Psoas muscle (tissue), 8 donors: ENCODE measurements at regions of chr7 and their contacts with region 1.

Region 1: GRCh38 chr7:140397784-140398750 is at the start of gene SLC37A3:
- DNase-seq: peak; percentile 87 to 92
- ATAC-seq: peak; percentile 98 to 100 (median 100)
- H3K4me3 ChIP-seq: peak within 1 kb of the TSS; percentile 98
- H3K27ac ChIP-seq: peak within 1 kb of the TSS; percentile 82
- H3K4me1 ChIP-seq: no peaks in the 10 kb centered on the region
- H3K27me3 ChIP-seq: peaks cover 0 to 13% (median 0%) of the 10 kb centered on the region in 3 donors
- CTCF ChIP-seq: peak; percentile 5
- total RNA-seq, gene SLC37A3: 7.0 to 9.1 (median 8.0) TPM

Region 2: GRCh38 chr7:139271718-139272628 is 1126.1 kb before region 1 on chr7:
- intact Hi-C with region 1: no loop called
- DNase-seq: no peak
- ATAC-seq: peak; percentile 76 to 94 (median 92)
- H3K4me3 ChIP-seq: peak overlapping the region; percentile 28
- H3K27ac ChIP-seq: peak overlapping the region; percentile 66
- H3K4me1 ChIP-seq: peaks cover 8% of the 10 kb centered on the region
- H3K27me3 ChIP-seq: no peaks in the 10 kb centered on the region
- CTCF ChIP-seq: no peak

Region 3: DNA sequence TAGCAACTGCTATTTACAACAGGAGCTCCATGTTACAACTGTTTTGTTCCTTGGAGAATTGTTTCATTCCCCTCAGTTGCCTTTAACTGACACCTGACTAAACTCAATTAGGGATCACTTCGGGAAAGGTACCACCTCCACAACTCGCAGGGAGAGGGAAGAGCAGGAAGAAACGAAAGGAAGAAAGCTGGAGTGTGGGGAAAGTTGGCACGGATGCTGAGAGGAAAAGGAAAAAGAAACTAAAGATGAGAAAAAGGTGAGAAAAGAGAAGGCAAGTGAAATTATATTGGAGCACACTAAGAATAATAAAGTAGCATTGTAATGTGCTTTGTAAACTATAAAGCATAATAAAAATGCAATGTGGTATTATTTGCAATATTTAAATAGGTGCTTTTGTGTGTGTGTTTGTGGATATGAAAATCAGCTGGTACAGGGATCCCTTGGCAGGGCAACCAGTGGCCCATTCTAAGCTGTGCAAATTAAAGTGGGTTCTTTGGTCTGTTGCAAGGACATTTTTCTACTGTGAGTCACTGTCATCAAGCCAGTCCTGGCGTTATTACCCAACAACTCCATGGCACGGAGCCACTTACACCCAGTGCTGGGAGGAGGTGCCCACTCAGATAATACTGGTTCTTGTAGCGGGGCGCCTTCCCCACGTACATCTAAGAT is 666.1 kb before region 1 on chr7:
- intact Hi-C with region 1: loop called in 1 of 2 experiments (anchors 5 kb)
- DNase-seq: peak; percentile 88 to 94
- ATAC-seq: peak; percentile 79 to 86 (median 82)
- H3K4me3 ChIP-seq: peak overlapping the region; percentile 32
- H3K27ac ChIP-seq: peak overlapping the region; percentile 89
- H3K4me1 ChIP-seq: peaks cover 79% of the 10 kb centered on the region
- H3K27me3 ChIP-seq: no peaks in the 10 kb centered on the region
- CTCF ChIP-seq: no peak